ENCODE measurements at regions of chr4 and their contacts with region 1.

Region 1: DNA sequence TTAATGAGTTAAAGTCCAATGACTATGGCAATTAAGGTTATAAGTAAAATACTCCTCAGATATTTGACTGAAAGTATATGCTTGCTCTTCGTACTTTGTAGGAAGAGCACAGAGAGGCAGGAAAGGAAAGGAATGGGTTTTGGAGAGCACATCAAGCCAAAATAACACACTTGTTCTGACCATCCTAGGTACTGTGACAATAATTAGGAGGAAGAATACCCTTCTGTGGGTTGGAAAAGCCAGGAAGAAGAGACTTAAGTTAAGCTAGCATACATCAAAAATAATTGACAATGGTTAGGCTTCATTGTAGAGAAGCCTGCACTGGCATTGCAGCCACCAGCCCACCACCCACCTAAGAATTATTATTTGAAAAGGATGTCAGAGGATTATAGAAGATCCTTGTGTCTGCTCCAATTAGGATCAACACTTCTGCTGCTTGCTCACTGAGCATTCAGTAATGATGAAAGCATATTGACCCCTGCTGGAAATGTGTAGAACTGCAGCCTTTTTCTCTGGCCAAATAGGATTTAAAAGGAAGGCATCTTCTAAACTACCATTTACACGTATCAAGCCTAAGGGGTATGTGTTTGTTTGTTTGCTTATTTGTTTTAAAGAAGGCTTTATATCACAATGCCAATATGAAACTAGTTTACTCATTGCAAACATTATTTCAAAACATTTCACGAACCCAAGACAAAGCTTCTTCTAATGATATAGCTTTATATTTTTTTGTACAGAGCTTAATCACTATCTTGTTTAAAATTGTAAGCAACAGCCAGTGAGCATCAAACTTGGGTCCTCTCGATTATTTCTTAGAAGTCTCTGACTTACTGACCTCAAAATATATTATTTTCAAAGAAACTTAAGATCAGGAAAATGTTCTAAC is 286.2 kb upstream of the TET2 start:
- DNase-seq: peak; percentile 57
- H3K4me3 Mint-ChIP-seq: no peak overlapping the region
- H3K27ac Mint-ChIP-seq: no peak overlapping the region
- H3K4me1 Mint-ChIP-seq: no peaks in the 10 kb centered on the region
- H3K27me3 Mint-ChIP-seq: no peaks in the 10 kb centered on the region
- CTCF ChIP-seq: peak; percentile 58

Region 2: DNA sequence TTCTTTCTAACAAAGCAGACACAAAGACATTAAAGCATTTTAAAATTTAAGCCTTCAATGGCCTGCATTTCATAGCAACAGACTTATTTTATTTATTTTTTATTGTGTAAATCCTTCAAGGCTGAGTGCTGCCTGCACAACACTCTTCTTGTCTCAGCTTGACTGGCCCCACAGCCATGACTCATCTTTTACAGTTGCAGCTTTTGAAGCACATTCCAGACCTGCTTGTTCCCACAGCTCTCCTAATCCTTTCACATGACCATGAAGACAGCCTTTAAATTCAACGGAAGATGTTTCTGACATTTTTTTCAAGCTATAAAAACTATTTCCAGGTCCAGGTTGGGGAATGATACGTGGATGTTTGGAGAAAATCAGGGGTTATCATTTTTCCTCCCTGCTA is 863.8 kb before region 1 on chr4:
- CTCF ChIA-PET with region 1: no interaction called
- intact Hi-C with region 1: loop called (anchors 5 kb)
- DNase-seq: peak; percentile 44
- H3K4me3 Mint-ChIP-seq: no peak overlapping the region
- H3K27ac Mint-ChIP-seq: no peak overlapping the region
- H3K4me1 Mint-ChIP-seq: no peaks in the 10 kb centered on the region
- H3K27me3 Mint-ChIP-seq: no peaks in the 10 kb centered on the region
- CTCF ChIP-seq: no peak

Region 3: GRCh38 chr4:104015680-104016253 is 844.7 kb before region 1 on chr4:
- CTCF ChIA-PET with region 1: no interaction called
- intact Hi-C with region 1: loop called (anchors 1 kb)
- DNase-seq: no peak
- H3K4me3 Mint-ChIP-seq: no peak overlapping the region
- H3K27ac Mint-ChIP-seq: no peak overlapping the region
- H3K4me1 Mint-ChIP-seq: no peaks in the 10 kb centered on the region
- H3K27me3 Mint-ChIP-seq: no peaks in the 10 kb centered on the region
- CTCF ChIP-seq: no peak

Region 4: DNA sequence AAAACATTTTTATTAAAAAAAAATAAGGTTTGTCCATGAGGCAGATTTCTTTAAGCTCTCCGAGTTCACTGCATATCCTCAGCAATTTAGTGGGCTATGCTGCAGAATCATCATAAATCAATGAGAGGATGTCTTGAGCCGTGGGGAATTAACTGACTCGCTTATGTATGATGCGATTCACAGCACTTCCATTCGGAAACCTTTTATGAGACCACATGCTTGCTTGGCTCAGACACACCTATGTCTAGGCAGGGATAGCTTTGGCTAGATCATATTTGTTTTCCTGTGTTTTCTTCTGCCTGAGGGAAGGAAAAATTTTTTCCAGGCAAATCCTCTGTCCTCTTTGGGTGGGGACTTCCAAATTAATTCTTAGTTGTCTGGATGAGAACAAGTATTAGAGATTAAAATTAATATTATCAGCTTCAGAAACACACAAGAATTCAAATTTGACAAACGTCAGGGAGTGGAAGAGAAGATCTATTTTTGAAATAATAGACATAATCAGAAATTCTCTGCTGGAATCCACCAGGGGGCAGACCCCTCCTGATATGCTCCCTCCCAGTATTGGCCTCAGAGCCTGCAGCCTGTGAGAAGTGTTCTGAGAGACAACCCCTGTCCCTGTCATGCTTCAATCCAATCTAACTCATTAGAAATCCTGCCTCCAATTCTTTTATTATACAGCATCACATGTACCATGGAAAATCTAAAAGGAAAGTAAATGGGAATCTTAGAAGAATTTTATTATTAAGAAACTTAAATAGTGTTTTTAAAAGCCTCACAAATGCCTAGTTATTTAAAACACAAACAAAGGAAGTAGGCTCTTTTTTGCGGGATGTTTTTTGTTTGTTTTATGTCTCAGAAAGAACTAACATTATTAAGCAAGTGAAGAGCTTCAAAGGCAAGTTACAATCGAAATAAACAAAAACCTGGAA is 795.6 kb before region 1 on chr4:
- CTCF ChIA-PET with region 1: no interaction called
- intact Hi-C with region 1: loop called (anchors 1 kb)
- DNase-seq: peak; percentile 53
- H3K4me3 Mint-ChIP-seq: no peak overlapping the region
- H3K27ac Mint-ChIP-seq: no peak overlapping the region
- H3K4me1 Mint-ChIP-seq: no peaks in the 10 kb centered on the region
- H3K27me3 Mint-ChIP-seq: no peaks in the 10 kb centered on the region
- CTCF ChIP-seq: peak; percentile 48

Region 5: GRCh38 chr4:104693599-104694201 is 166.8 kb before region 1 on chr4:
- CTCF ChIA-PET with region 1: no interaction called
- intact Hi-C with region 1: loop called (anchors 1 kb)
- DNase-seq: peak; percentile 11
- H3K4me3 Mint-ChIP-seq: no peak overlapping the region
- H3K27ac Mint-ChIP-seq: no peak overlapping the region
- H3K4me1 Mint-ChIP-seq: no peaks in the 10 kb centered on the region
- H3K27me3 Mint-ChIP-seq: no peaks in the 10 kb centered on the region
- CTCF ChIP-seq: no peak

Region 6: GRCh38 chr4:104964410-104965175 is 104.1 kb after region 1 on chr4:
- CTCF ChIA-PET with region 1: no interaction called
- intact Hi-C with region 1: no loop called
- DNase-seq: no peak
- H3K4me3 Mint-ChIP-seq: no peak overlapping the region
- H3K27ac Mint-ChIP-seq: no peak overlapping the region
- H3K4me1 Mint-ChIP-seq: peaks cover 42% of the 10 kb centered on the region
- H3K27me3 Mint-ChIP-seq: no peaks in the 10 kb centered on the region
- CTCF ChIP-seq: no peak

Region 7: DNA sequence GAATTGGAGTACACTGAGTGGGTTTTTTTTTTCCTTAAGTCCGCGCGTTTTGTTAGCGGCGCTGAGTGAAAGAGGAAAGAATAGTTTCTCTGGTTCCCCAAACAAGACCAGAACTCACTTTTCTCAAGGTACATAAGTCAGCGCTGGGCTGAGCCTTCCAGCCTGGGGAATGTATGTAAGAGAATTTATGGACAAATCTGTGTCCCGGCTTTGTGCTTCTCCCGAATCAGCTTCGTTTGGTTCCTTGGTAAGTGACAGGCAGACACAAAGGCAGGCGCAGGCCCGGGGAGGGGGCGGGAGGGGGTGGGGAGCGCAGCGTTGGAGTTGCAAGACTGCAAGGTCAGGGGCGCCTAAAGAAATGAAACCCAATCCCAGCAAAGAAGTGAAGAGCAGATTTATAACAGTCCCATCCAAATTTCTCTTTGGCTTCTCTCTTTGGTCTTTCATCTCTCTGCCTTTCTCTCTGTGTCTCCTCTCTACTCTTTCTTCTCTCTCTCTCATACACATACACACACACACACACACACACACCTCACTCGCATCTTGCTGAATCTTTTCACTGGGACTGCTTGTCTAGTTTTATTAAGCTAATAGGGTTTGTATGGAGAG is 287.2 kb after region 1 on chr4:
- CTCF ChIA-PET with region 1: no interaction called
- intact Hi-C with region 1: no loop called
- DNase-seq: peak; percentile 1
- H3K4me3 Mint-ChIP-seq: peak overlapping the region; percentile 99
- H3K27ac Mint-ChIP-seq: peak overlapping the region; percentile 100
- H3K4me1 Mint-ChIP-seq: peaks cover 5% of the 10 kb centered on the region
- H3K27me3 Mint-ChIP-seq: no peaks in the 10 kb centered on the region
- CTCF ChIP-seq: no peak

Measured in Calu3 (cell line).